ENCODE measurements at regions of chr12 and their contacts with region 1.

Region 1: DNA sequence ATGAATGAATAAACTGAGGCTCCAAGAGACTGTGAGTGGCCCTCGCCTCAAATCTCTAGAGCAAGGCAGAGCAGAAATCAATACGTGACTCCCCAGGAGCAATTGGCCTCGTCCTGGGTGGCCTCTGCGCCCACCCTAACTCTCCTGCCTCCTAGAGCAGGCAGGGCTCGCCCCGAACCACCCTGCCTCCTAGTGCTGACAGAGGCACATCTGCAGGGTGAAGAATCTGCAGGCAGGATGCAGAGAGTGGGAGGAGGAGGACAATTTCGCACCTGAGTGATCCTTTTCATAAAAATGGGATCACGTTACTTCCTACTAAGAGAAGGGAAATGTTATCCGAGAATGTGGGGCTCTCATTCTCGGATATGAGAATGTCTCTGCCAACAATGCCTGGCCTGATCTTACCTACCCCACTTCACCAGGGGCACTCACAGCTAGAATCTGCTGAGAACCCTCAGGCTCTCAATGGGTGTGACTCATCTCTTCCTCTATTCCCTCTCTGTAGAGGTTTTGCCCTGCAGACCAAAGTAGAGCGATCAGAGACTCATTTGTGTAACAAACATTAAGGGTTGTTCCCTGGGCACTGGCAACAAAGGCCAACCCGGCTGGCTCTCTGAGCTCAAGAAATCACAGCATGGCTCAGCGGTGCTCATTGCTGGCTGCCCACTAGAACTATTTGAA is 61.7 kb upstream of the BCL2L14 start:
- DNase-seq: peak; percentile 56
- ATAC-seq: peak; percentile 77
- H3K4me3 Mint-ChIP-seq: peak overlapping the region; percentile 74
- H3K27ac Mint-ChIP-seq: peak overlapping the region; percentile 92
- H3K4me1 Mint-ChIP-seq: peaks cover 50% of the 10 kb centered on the region
- H3K27me3 Mint-ChIP-seq: no peaks in the 10 kb centered on the region

Region 2: DNA sequence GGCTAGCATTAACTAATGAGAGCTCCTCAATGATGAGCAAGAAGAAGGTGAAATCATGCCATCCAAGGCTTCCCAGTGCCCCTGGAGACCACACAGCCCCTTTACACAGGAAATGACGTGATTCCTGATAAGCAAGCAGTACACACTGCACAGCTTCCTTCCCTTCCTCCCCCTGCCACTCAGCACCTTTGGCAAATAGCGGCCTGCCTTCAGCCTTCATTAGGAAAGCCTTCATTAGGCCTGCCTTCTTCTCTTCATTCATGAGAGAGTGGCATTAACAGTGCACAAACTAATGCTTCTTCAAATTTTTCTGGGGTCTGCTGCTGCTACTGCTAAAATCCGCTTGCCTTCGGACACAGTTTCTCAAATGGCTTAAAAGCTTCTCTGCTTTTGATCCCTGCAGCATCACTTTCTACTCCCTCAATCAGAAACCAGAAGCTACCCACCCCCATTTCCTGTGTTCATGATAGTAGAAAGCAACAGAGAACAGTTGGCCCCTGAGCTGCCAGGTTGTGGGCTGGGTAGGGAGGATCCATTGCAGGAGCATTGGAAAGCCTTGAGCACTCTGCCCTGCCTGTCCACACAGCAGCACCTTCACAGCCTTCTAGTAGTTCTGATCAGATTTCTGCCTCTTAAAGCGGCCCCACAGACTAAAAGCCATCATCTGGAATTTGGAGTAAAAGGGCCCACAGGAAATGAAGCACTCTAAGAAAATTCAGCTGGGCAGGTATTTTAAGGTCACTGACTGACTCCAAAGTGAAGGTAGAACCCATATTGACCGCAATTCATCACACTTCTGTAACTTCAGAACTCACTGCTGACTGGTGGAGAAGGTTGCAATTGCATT is 463.4 kb before region 1 on chr12:
- POLR2A ChIA-PET with region 1: interaction called, 10 read pairs
- DNase-seq: peak; percentile 70
- ATAC-seq: peak; percentile 82
- H3K4me3 Mint-ChIP-seq: peak overlapping the region; percentile 73
- H3K27ac Mint-ChIP-seq: peak overlapping the region; percentile 96
- H3K4me1 Mint-ChIP-seq: peaks cover 44% of the 10 kb centered on the region
- H3K27me3 Mint-ChIP-seq: no peaks in the 10 kb centered on the region

Region 3: DNA sequence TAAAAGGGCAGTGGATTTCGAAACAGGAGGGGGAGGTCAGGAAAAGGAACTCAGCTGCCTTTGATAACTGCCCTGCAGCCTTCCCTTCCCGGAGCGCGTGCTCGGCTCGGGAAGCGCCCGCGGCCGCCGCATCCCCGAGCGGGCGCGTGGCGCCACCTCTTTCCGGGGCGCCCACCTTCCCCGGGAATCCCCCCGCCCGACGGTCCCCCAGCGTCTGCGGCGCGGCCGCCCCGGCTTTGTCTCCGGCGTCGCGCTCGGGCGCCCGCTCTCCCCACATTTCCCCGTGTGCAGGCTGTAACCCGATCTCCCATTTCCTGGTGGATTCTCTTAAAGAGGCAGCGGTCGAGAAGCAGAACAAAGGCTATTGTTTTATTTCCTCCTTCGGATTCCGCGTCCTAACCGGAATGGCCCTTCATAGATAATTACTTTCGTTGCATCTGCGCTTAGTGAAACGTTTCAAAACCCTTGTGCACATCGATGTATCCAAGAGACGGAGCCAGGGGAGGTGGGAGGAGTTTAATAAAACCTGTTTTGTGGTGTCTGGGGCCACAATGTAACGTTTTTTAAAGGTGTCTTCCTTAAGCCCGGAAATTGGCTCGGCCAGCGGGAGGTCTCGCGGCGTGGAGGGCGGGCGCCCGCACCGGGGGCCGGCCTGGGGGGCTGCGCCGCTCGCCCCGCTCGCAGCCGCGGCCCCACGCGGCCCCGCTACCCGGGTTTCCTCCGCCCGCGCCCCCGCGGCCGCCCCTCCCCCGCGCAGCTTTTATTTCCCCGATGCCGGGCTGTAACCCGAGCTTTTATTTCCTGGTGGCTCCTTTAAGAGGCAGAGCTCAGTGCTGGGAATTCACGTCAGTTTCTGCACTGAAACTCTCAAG is 360.0 kb before region 1 on chr12 and contains the start of gene ETV6:
- POLR2A ChIA-PET with region 1: interaction called, 28 read pairs
- DNase-seq: peak; percentile 80
- ATAC-seq: peak; percentile 62
- H3K4me3 Mint-ChIP-seq: peak within 1 kb of the TSS; percentile 98
- H3K27ac Mint-ChIP-seq: peak within 1 kb of the TSS; percentile 98
- H3K4me1 Mint-ChIP-seq: peaks cover 26% of the 10 kb centered on the region
- H3K27me3 Mint-ChIP-seq: no peaks in the 10 kb centered on the region
- total RNA-seq, gene ETV6: 22.5 to 26.0 TPM

Region 4: GRCh38 chr12:11981121-11981733 is 27.8 kb before region 1 on chr12:
- POLR2A ChIA-PET with region 1: interaction called, 16 read pairs
- DNase-seq: peak; percentile 52
- ATAC-seq: peak; percentile 89
- H3K4me3 Mint-ChIP-seq: peak overlapping the region; percentile 58
- H3K27ac Mint-ChIP-seq: peak overlapping the region; percentile 90
- H3K4me1 Mint-ChIP-seq: peaks cover 32% of the 10 kb centered on the region
- H3K27me3 Mint-ChIP-seq: peaks cover 5% of the 10 kb centered on the region

Region 5: DNA sequence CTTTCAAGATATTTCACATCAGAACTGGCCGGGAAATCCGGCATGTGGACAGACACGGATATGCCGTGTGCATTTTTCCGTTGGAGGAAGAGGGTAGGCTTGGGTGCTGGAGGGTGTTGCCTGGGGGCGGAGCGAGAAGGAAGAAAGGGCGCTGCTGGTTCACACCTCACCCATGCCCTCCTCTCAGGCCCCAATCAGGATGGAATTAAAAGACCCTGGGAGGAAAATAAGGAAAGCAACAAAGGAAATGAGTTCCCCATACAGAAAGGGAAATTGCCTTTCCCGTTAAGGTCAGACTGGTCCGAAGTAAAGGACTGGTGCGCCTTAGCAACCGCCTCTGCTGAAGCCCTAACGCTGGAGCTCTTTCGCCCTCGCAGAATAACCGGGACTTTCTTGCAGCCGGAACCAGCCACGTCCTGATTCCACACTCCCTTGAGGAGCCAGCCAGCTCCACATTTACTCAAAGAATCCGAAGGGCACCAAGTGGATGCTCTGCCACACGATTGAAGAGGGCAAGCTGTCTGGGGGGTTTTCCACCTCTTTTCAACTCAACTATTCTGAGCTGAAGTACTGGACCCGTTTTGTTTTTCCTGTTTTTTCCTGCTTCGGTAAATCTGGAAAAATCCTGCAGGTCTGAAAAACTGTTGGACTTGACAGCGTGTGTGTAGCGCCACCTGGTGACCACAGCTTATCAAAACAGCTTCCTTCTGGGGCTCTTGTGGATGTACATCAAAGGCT is 23.9 kb after region 1 on chr12:
- POLR2A ChIA-PET with region 1: interaction called, 16 read pairs
- DNase-seq: peak; percentile 68
- ATAC-seq: peak; percentile 88
- H3K4me3 Mint-ChIP-seq: peak overlapping the region; percentile 78
- H3K27ac Mint-ChIP-seq: peak overlapping the region; percentile 64
- H3K4me1 Mint-ChIP-seq: peaks cover 10% of the 10 kb centered on the region
- H3K27me3 Mint-ChIP-seq: peaks cover 5% of the 10 kb centered on the region

Region 6: GRCh38 chr12:12171991-12172521 is 163.0 kb after region 1 on chr12:
- POLR2A ChIA-PET with region 1: no interaction called
- DNase-seq: no peak
- ATAC-seq: peak; percentile 83
- H3K4me3 Mint-ChIP-seq: no peak overlapping the region
- H3K27ac Mint-ChIP-seq: peak overlapping the region; percentile 17
- H3K4me1 Mint-ChIP-seq: peaks cover 13% of the 10 kb centered on the region
- H3K27me3 Mint-ChIP-seq: peaks cover 74% of the 10 kb centered on the region

Measured in activated naive CD8-positive, alpha-beta T cell treated with anti-CD3 and anti-CD28 coated beads, Interleukin-2, amount 10 ng/mL, durations not matched to agents 7 days and 5 days (primary cell).